ENCODE measurements at regions of chr6 and their contacts with region 1.

Region 1: GRCh38 chr6:43608310-43608763 is 20.7 kb downstream of the GTPBP2 start:
- DNase-seq: peak; percentile 22 to 68 (median 41)
- H3K4me3 ChIP-seq: no peak overlapping the region
- H3K4me3 Mint-ChIP-seq: no peak overlapping the region
- H3K27ac ChIP-seq: no peak overlapping the region
- H3K27ac Mint-ChIP-seq: peak overlapping the region in 3 of 8 donors; percentile 27 to 79 (median 33)
- H3K4me1 ChIP-seq: no peaks in the 10 kb centered on the region
- H3K4me1 Mint-ChIP-seq: peaks cover 3 to 6% (median 4%) of the 10 kb centered on the region in 3 donors
- H3K27me3 ChIP-seq: no peaks in the 10 kb centered on the region
- H3K27me3 Mint-ChIP-seq: no peaks in the 10 kb centered on the region

Region 2: GRCh38 chr6:43593938-43594337 is 14.4 kb before region 1 on chr6:
- CTCF ChIA-PET with region 1: interaction called, 11 read pairs
- POLR2A ChIA-PET with region 1: no interaction called
- DNase-seq: no peak
- H3K4me3 ChIP-seq: no peak overlapping the region
- H3K4me3 Mint-ChIP-seq: no peak overlapping the region
- H3K27ac ChIP-seq: no peak overlapping the region
- H3K27ac Mint-ChIP-seq: no peak overlapping the region
- H3K4me1 ChIP-seq: no peaks in the 10 kb centered on the region
- H3K4me1 Mint-ChIP-seq: peaks cover 0 to 4% (median 0%) of the 10 kb centered on the region in 3 donors
- H3K27me3 ChIP-seq: no peaks in the 10 kb centered on the region
- H3K27me3 Mint-ChIP-seq: no peaks in the 10 kb centered on the region

Measured in CD8-positive, alpha-beta memory T cell (primary cell).